ENCODE measurements at regions of chr9 and their contacts with region 1.

Region 1: DNA sequence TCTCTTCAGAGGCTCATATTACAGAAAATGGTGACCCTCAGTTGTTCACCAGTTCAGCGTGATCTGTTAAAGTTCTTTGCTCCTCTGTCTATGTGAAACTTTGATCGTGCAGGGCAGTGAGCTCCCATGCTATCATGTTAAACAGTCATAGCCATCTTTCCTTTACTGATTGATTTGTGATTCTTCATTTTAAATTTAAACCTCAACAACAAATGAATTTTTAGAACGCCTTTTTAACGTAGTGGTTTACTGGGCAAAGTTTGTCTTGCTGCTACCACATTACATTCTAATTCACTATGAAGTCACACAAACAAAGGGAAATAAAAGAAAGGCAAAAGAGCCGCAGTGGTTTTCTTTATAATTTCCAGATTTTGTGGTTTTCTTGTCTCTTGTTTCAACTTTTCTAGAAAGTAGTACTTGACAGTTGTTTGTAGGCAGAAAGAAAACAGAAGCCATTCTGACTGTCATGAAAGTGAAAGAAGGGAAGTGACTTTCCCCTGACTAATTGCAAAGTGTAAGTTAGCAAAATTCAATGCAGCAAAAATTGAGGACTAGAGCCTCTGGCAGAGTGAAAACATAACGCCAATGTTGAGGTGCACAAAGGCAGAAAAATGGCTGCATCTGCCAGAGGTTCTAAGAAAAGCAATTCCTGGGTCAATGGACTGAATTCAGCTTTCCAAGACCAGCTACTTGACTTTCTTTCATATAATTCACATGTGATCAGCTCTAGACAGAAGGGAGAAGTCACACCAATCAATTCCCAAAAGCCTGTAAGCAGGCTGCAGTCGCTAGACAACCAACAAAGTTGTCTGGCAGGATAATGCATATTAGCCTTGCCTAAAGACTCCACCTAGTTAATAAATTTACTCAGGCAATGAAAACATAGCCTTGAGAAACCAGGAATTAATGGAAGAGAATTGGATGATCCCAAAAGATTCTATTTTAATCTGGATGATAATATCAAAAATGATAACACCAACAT is 7.1 kb upstream of the IFNA6 start:
- DNase-seq: peak; percentile 28
- H3K4me3 Mint-ChIP-seq: peak overlapping the region; percentile 36
- H3K27ac Mint-ChIP-seq: no peak overlapping the region
- H3K4me1 Mint-ChIP-seq: peaks cover 19% of the 10 kb centered on the region
- H3K27me3 Mint-ChIP-seq: peaks cover 13% of the 10 kb centered on the region

Region 2: GRCh38 chr9:20684035-20684872 is 673.5 kb before region 1 on chr9 and contains the start of gene FOCAD:
- CTCF ChIA-PET with region 1: no interaction called
- intact Hi-C with region 1: loop called (anchors 5 kb)
- DNase-seq: peak; percentile 95
- H3K4me3 Mint-ChIP-seq: peak within 1 kb of the TSS; percentile 88
- H3K27ac Mint-ChIP-seq: peak within 1 kb of the TSS; percentile 76
- H3K4me1 Mint-ChIP-seq: peaks cover 17% of the 10 kb centered on the region
- H3K27me3 Mint-ChIP-seq: no peaks in the 10 kb centered on the region
- total RNA-seq, gene FOCAD: 31.7 to 32.2 TPM

Region 3: DNA sequence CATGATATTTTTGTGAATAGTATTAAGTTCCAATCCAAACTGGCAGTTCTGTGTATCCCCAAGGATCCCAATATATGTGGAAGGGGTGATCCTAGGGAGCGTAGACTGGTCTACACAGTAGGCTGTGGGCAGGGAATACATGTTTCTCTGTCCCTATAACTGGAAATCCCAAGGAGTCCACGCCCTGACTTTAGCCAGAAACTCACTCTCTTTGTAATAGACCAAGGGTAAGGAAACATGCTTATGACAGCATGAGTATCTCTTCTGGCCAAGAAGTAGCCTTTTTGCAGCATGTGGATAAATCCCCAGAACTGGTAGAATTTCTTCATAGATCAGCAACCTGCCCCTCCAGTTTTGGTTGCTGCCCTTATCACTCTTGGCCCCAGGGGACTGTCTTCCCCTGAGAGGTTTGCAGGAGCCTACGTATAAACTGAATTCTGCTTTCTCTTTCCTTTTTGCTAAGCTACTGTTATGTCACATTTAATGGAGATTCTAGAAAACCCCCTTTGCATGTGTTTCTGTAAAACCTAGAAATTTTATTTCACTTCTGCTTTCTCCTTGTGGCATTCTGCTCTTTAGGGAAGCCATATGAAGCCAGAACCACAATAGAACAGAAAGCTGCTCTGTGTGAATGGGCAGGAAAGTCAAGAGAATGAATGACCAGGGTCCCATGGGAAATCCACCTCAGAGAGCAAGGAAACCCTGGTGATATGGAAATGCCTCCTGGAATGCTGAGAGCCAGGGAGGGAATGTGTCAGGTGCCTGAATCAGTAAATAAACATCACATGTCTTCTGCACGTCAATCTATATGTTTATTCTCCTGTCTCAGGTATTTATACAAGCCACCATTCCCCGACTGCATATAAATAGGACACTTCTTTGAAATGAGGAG is 23.9 kb after region 1 on chr9:
- CTCF ChIA-PET with region 1: no interaction called
- intact Hi-C with region 1: loop called (anchors 1 kb)
- DNase-seq: peak; percentile 17
- H3K4me3 Mint-ChIP-seq: no peak overlapping the region
- H3K27ac Mint-ChIP-seq: no peak overlapping the region
- H3K4me1 Mint-ChIP-seq: peaks cover 14% of the 10 kb centered on the region
- H3K27me3 Mint-ChIP-seq: peaks cover 32% of the 10 kb centered on the region

Region 4: DNA sequence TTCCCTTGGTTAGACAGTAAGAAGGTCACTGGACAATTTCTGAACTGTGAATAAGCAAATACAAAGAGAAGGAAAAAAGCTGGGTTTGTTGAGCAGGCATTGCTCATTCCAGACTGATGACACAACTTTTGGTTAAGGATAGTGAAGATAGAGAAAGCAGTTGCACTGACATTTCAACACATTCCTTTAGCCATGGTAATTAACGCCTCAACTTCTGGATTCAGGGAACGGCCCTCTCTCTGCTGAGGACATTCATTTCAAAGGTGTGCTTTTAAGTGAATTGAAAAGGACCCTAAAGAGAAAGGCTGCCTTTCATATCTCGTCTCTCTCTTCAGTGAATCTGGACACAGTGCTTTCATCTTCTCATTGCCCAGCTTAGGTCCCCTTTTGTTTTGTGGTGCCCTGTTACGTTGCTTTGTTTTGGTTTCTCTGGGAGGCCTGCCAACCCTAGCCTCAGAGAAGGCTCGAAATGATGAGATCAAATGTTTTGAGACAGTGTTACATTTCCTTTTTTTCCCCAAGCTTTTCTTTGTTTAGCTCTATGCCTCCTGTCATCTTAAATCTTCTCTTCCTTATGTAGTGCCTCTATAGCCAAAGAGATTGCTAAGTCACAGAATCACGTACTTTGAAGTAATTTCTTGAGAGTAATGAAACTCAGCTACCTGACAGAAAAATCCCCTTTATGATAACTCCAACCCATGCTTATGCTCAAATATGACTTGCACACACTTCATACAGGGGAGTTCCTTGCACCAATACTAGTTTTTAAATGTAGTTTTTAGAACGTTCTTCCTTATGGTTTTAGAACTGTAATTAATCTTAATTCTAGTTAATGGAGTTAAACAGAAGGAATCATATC is 218.8 kb after region 1 on chr9:
- CTCF ChIA-PET with region 1: no interaction called
- intact Hi-C with region 1: loop called (anchors 2 kb)
- DNase-seq: peak; percentile 80
- H3K4me3 Mint-ChIP-seq: peak overlapping the region; percentile 3
- H3K27ac Mint-ChIP-seq: peak overlapping the region; percentile 68
- H3K4me1 Mint-ChIP-seq: peaks cover 37% of the 10 kb centered on the region
- H3K27me3 Mint-ChIP-seq: peaks cover 2% of the 10 kb centered on the region

Region 5: GRCh38 chr9:21761309-21761901 is 403.6 kb after region 1 on chr9:
- CTCF ChIA-PET with region 1: no interaction called
- intact Hi-C with region 1: loop called (anchors 1 kb)
- DNase-seq: peak; percentile 60
- H3K4me3 Mint-ChIP-seq: no peak overlapping the region
- H3K27ac Mint-ChIP-seq: no peak overlapping the region
- H3K4me1 Mint-ChIP-seq: peaks cover 13% of the 10 kb centered on the region
- H3K27me3 Mint-ChIP-seq: peaks cover 29% of the 10 kb centered on the region

Region 6: GRCh38 chr9:22238809-22239684 is 881.3 kb after region 1 on chr9:
- CTCF ChIA-PET with region 1: no interaction called
- intact Hi-C with region 1: loop called (anchors 1 kb)
- DNase-seq: no peak
- H3K4me3 Mint-ChIP-seq: no peak overlapping the region
- H3K27ac Mint-ChIP-seq: no peak overlapping the region
- H3K4me1 Mint-ChIP-seq: peaks cover 49% of the 10 kb centered on the region
- H3K27me3 Mint-ChIP-seq: peaks cover 15% of the 10 kb centered on the region

Measured in activated naive CD4-positive, alpha-beta T cell treated with anti-CD3 and anti-CD28 coated beads for 36 hours (primary cell).